Activated naive CD8-positive, alpha-beta T cell treated with anti-CD3 and anti-CD28 coated beads, Interleukin-2, amount 10 ng/mL, durations not matched to agents 7 days and 5 days (primary cell): ENCODE measurements at regions of chr15 and their contacts with region 1.

Region 1: GRCh38 chr15:63191895-63192618 is 2.7 kb downstream of the RAB8B start:
- DNase-seq: no peak
- ATAC-seq: peak; percentile 46
- H3K4me3 Mint-ChIP-seq: peak overlapping the region; percentile 97
- H3K27ac Mint-ChIP-seq: peak overlapping the region; percentile 95
- H3K4me1 Mint-ChIP-seq: peaks cover 61% of the 10 kb centered on the region
- H3K27me3 Mint-ChIP-seq: no peaks in the 10 kb centered on the region

Region 2: GRCh38 chr15:63157118-63157843 is 34.8 kb before region 1 on chr15 and contains the start of gene RPS27L:
- POLR2A ChIA-PET with region 1: interaction called, 28 read pairs
- DNase-seq: peak; percentile 87
- ATAC-seq: peak; percentile 97
- H3K4me3 Mint-ChIP-seq: peak within 1 kb of the TSS; percentile 98
- H3K27ac Mint-ChIP-seq: peak within 1 kb of the TSS; percentile 98
- H3K4me1 Mint-ChIP-seq: peaks cover 9% of the 10 kb centered on the region
- H3K27me3 Mint-ChIP-seq: no peaks in the 10 kb centered on the region
- total RNA-seq, gene RPS27L: 177 to 179 TPM

Region 3: DNA sequence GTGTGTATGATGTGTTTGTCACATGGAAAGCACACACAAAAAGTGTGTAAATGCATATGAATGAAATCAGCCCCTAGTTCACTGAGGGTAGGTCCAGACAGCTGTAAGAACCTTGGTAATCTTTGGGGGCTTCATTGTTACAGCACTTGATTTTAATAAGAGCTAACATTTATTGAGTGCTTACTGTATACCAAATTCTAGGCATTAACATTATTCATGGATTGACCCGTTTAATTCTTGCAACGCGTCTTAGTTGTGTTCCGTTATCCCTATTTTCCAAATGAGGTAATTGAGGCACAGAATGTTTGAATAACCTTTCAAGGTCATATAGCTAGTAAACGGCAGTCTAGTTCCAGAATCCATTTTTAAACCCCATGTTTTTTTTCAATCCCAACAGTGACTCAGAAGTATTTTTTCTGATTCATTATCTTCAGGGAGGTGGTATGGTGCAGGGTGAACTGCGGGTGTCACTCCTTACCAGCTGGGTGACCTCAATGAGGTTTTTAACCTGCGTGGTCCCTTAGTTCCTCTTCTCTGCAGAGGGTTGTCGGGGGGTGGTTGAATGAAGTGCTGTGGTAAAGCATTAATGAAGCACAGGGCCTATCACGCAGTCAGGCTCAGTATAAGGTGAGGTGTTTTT is 11.5 kb after region 1 on chr15:
- POLR2A ChIA-PET with region 1: interaction called, 21 read pairs
- DNase-seq: no peak
- ATAC-seq: peak; percentile 75
- H3K4me3 Mint-ChIP-seq: peak overlapping the region; percentile 39
- H3K27ac Mint-ChIP-seq: peak overlapping the region; percentile 39
- H3K4me1 Mint-ChIP-seq: peaks cover 72% of the 10 kb centered on the region
- H3K27me3 Mint-ChIP-seq: no peaks in the 10 kb centered on the region

Region 4: DNA sequence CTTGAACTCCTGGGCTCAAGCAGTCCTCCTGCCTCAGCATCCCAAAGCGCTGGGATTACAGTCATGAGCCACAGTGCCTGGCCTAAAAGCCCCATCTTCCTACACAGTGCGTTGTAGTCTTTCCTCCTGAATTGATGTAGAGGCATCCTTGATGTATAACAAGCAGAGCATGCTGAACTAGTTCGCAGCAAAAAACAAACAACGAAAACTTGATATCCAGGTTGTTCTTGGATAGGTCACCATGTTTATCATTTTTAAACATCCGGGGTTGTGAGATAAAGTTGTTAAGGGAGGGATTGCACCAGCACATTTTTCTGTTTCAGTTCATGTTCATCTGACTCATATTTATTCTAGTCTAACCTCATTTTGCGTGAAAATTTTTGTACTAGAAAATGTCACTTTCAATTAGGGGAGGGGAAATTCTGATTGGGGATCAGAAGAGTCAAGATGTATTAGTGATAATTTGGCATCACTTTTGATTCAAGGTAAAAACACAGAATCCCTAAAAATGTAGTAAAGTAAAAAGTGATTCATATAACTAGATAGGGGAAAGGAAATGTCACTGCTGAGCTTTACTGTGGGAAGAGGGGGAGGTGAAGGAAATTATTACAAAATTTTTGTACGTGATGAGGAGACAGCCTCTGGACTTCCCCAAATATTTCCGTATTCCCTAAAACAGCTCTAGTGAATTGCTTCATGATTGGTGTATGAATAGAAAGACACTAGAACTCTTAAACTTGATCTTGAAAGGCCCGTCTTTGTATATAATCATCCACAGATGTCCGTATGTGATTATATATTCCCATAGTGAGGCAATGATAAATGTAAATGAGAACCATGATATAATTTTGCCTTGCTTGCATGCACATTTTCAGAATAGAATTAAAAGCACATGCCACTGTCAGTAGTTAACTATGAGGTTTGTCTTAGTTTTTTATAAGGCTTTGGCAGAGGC is 20.3 kb after region 1 on chr15:
- POLR2A ChIA-PET with region 1: interaction called, 20 read pairs
- DNase-seq: no peak
- ATAC-seq: peak; percentile 49
- H3K4me3 Mint-ChIP-seq: peak overlapping the region; percentile 76
- H3K27ac Mint-ChIP-seq: peak overlapping the region; percentile 88
- H3K4me1 Mint-ChIP-seq: peaks cover 61% of the 10 kb centered on the region
- H3K27me3 Mint-ChIP-seq: no peaks in the 10 kb centered on the region

Region 5: DNA sequence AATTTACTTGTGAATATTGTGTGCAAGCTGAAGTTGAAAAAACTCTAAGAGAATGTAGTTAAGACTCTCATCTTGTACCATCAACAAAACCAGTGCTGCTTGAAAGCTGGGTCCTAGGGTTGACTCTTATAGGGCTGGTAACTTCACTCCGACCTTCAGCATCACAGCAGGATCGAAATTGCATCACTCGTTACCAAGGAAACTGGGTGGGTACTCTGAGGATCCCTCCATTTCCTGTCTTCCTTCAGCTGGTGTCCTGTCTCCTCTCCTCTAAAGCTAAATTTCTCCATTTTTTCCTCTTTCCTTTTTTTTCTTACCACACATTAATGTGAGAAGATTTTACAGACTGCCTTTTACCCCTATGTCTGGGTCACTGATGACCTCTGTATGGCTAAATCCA is 82.4 kb after region 1 on chr15:
- POLR2A ChIA-PET with region 1: interaction called, 12 read pairs
- DNase-seq: no peak
- ATAC-seq: peak; percentile 19
- H3K4me3 Mint-ChIP-seq: peak overlapping the region; percentile 47
- H3K27ac Mint-ChIP-seq: peak overlapping the region; percentile 67
- H3K4me1 Mint-ChIP-seq: peaks cover 25% of the 10 kb centered on the region
- H3K27me3 Mint-ChIP-seq: no peaks in the 10 kb centered on the region